Common myeloid progenitor, CD34-positive (primary cell): ENCODE measurements at regions of chr11 and their contacts with region 1.

Region 1: GRCh38 chr11:122754553-122755322 is 83.6 kb upstream of the CRTAM start:
- DNase-seq: peak; percentile 51 to 68 (median 65)
- H3K4me3 ChIP-seq: no peak overlapping the region
- H3K27ac ChIP-seq: no peak overlapping the region
- H3K4me1 ChIP-seq: peaks cover 14 to 76% (median 60%) of the 10 kb centered on the region in 4 experiments
- H3K27me3 ChIP-seq: no peaks in the 10 kb centered on the region

Region 2: GRCh38 chr11:122681735-122682134 is 73.0 kb before region 1 on chr11:
- CTCF ChIA-PET with region 1: interaction called, 325 read pairs
- POLR2A ChIA-PET with region 1: no interaction called
- DNase-seq: peak in 2 of 3 donors; percentile 59 to 67
- H3K4me3 ChIP-seq: no peak overlapping the region
- H3K27ac ChIP-seq: no peak overlapping the region
- H3K4me1 ChIP-seq: peaks cover 0 to 32% (median 12%) of the 10 kb centered on the region in 4 experiments
- H3K27me3 ChIP-seq: no peaks in the 10 kb centered on the region

Region 3: GRCh38 chr11:122697636-122698167 is 57.0 kb before region 1 on chr11:
- CTCF ChIA-PET with region 1: interaction called, 66 read pairs
- POLR2A ChIA-PET with region 1: interaction called, 4 read pairs
- DNase-seq: peak; percentile 85 to 99 (median 98)
- H3K4me3 ChIP-seq: peak overlapping the region in 4 of 7 experiments; percentile 17 to 55 (median 38)
- H3K27ac ChIP-seq: peak overlapping the region in 1 of 2 experiments; percentile 71
- H3K4me1 ChIP-seq: peaks cover 27 to 67% (median 58%) of the 10 kb centered on the region in 4 experiments
- H3K27me3 ChIP-seq: no peaks in the 10 kb centered on the region

Region 4: GRCh38 chr11:122717264-122717867 is 37.4 kb before region 1 on chr11:
- CTCF ChIA-PET with region 1: interaction called, 114 read pairs
- POLR2A ChIA-PET with region 1: interaction called, 5 read pairs
- DNase-seq: peak; percentile 64 to 97 (median 93)
- H3K4me3 ChIP-seq: peak overlapping the region in 3 of 7 experiments; percentile 1 to 26 (median 2)
- H3K27ac ChIP-seq: peak overlapping the region in 1 of 2 experiments; percentile 15
- H3K4me1 ChIP-seq: peaks cover 34 to 92% (median 65%) of the 10 kb centered on the region in 4 experiments
- H3K27me3 ChIP-seq: no peaks in the 10 kb centered on the region

Region 5: DNA sequence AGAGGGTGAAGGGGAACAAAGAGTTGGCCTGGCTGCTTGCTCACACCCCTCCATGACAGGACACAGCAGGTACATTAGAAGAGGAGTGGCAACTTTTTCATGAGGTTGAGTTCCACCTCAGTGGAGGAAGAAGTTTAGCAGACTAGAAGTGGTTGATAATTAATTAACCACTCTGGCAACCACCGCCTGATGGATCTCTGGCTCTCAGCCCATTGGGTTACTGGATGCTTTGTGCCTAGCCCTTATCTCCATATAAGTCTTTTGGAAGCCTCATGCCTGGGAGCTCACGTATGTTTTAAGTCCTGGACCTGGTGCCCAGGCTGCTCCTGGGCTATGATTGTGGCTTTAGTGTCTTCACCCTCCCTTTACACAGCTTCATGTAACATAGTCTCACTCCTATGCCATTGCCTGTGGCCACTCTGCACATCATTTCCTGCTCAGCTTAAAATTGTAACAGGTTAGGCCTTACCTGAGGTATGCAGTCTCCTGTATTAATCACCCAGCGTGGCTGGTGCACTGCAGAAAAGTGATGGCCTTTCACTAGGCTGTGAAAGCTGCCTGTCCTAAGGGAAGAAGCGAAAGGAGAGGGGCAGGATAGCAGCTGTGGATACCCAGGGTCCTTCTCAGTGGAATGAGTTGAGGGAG is 10.9 kb after region 1 on chr11:
- CTCF ChIA-PET with region 1: interaction called, 24 read pairs
- POLR2A ChIA-PET with region 1: no interaction called
- DNase-seq: peak in 1 of 3 donors; percentile 20
- H3K4me3 ChIP-seq: no peak overlapping the region
- H3K27ac ChIP-seq: no peak overlapping the region
- H3K4me1 ChIP-seq: peaks cover 0 to 5% (median 0%) of the 10 kb centered on the region in 4 experiments
- H3K27me3 ChIP-seq: no peaks in the 10 kb centered on the region

Region 6: GRCh38 chr11:122781378-122782195 is 26.8 kb after region 1 on chr11:
- CTCF ChIA-PET with region 1: interaction called, 71 read pairs
- POLR2A ChIA-PET with region 1: no interaction called
- DNase-seq: peak; percentile 71 to 78 (median 72)
- H3K4me3 ChIP-seq: no peak overlapping the region
- H3K27ac ChIP-seq: no peak overlapping the region
- H3K4me1 ChIP-seq: peaks cover 0 to 27% (median 20%) of the 10 kb centered on the region in 4 experiments
- H3K27me3 ChIP-seq: no peaks in the 10 kb centered on the region

Region 7: GRCh38 chr11:122808478-122808869 is 53.7 kb after region 1 on chr11:
- CTCF ChIA-PET with region 1: interaction called, 12 read pairs
- POLR2A ChIA-PET with region 1: no interaction called
- DNase-seq: peak in 2 of 3 donors; percentile 44 to 49
- H3K4me3 ChIP-seq: peak overlapping the region in 3 of 7 experiments; percentile 12 to 55 (median 47)
- H3K27ac ChIP-seq: peak overlapping the region; percentile 4 to 58
- H3K4me1 ChIP-seq: peaks cover 10 to 40% (median 21%) of the 10 kb centered on the region in 4 experiments
- H3K27me3 ChIP-seq: no peaks in the 10 kb centered on the region